Tibial artery (tissue), 4 donors: ENCODE measurements at regions of chr10 and their contacts with region 1.

Region 1: DNA sequence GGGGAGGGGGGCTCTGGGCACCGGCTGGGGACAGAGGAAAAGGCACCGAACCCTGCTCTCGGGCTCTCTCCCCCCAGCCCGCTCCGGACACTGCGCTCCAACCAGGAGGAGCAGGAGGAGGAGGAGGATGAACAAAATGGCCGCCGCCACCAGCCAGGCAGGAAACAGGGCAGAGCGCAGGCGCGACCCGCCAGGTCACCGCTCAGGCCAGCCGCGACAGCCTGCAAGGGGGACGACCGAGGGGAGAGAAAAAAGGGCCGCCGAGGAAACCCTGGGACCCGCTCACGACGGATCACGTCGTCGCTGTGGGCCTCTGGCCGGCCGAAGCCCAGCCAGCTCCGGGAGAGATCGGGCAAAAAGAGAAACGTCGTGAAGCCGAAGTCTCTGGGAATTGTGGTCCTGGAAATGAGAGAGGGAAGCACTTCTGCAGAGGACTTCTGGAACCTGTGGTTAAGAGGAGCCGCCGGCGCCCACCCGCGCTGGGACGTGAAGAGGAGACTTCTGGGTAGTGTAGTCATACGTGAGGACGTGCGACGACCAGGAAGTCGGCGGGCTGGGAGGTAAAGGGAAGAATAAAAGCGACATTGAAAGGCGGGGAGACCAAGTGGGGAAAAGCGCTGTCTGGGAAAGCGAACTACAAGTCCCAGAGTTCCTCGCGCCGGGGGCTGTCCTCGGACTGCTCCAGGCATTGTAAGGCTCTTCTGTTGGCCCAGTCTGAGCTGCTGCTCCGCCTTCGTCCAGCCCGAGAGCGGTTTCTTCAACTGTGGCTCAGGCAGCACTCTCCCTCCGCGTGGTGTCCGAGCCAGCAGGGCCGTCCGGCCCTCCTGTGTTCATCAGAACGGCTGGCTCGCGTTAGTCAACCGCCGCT is at the start of gene TIAL1:
- DNase-seq: peak; percentile 98 to 99
- H3K4me3 ChIP-seq: peak within 1 kb of the TSS; percentile 68 to 95
- H3K27ac ChIP-seq: peak within 1 kb of the TSS; percentile 90 to 97
- H3K4me1 ChIP-seq: peaks cover 0 to 44% (median 27%) of the 10 kb centered on the region in 4 donors
- H3K27me3 ChIP-seq: no peaks in the 10 kb centered on the region
- CTCF ChIP-seq: no peak

Region 2: GRCh38 chr10:119650692-119651513 is 54.1 kb after region 1 on chr10 and contains the start of gene BAG3:
- intact Hi-C with region 1: loop called (anchors 5 kb)
- DNase-seq: peak; percentile 97
- H3K4me3 ChIP-seq: peak within 1 kb of the TSS; percentile 94 to 98
- H3K27ac ChIP-seq: peak within 1 kb of the TSS; percentile 98 to 100
- H3K4me1 ChIP-seq: peaks cover 3 to 35% (median 26%) of the 10 kb centered on the region in 4 donors
- H3K27me3 ChIP-seq: no peaks in the 10 kb centered on the region
- CTCF ChIP-seq: no peak

Region 3: DNA sequence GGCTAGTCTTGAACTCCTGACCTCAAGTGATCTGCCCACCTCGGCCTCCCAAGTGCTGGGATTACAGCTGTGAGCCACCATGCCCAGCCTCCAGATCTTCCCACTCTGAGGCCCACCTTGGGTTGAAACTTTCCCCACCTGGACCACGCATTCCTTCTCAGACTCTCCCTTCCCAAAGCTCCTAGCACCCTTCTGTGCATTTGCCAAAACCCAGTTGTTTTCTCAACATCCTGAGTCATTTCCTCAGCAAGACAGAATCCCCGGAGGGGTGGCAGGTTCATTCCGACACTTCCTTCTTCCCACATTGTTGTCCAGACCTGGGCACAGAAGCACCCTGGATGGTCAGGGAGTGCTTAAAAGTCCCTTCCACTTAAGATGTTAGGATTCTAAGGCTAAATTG is 83.3 kb after region 1 on chr10:
- intact Hi-C with region 1: loop called (anchors 5 kb)
- DNase-seq: peak in 1 of 2 donors; percentile 54
- H3K4me3 ChIP-seq: no peak overlapping the region
- H3K27ac ChIP-seq: peak overlapping the region; percentile 55 to 64
- H3K4me1 ChIP-seq: peaks cover 0 to 51% (median 40%) of the 10 kb centered on the region in 4 donors
- H3K27me3 ChIP-seq: no peaks in the 10 kb centered on the region
- CTCF ChIP-seq: no peak

Region 4: DNA sequence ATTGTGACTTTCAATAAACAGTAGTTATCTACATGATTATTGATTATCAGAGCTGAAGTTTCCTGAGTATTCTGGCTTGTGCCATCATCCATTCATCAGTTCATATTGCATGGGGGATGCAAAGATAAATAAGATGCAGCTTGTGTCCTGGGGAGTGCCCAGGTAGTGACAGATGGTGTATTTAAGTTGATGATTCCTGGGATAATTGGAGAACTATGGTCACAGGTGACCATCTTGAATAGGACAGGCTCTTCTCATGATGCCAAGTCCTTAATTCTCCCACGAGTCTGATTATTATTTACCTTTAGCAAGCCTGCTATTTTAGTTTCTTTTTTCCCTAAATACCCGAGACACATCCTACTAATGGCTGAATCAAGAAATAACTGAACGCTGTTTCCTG is 925.1 kb after region 1 on chr10:
- intact Hi-C with region 1: no loop called
- DNase-seq: no peak
- H3K4me3 ChIP-seq: no peak overlapping the region
- H3K27ac ChIP-seq: no peak overlapping the region
- H3K4me1 ChIP-seq: no peaks in the 10 kb centered on the region
- H3K27me3 ChIP-seq: no peaks in the 10 kb centered on the region
- CTCF ChIP-seq: no peak